ENCODE measurements at regions of chr18 and their contacts with region 1.

Region 1: GRCh38 chr18:54679318-54680149 is 88.5 kb downstream of the DYNAP start:
- DNase-seq: peak; percentile 79
- H3K4me3 ChIP-seq: no peak overlapping the region
- H3K27ac ChIP-seq: no peak overlapping the region
- H3K4me1 ChIP-seq: no peaks in the 10 kb centered on the region
- H3K27me3 ChIP-seq: no peaks in the 10 kb centered on the region
- CTCF ChIP-seq: peak; percentile 27 to 30
- POLR2A ChIP-seq: no peak

Region 2: DNA sequence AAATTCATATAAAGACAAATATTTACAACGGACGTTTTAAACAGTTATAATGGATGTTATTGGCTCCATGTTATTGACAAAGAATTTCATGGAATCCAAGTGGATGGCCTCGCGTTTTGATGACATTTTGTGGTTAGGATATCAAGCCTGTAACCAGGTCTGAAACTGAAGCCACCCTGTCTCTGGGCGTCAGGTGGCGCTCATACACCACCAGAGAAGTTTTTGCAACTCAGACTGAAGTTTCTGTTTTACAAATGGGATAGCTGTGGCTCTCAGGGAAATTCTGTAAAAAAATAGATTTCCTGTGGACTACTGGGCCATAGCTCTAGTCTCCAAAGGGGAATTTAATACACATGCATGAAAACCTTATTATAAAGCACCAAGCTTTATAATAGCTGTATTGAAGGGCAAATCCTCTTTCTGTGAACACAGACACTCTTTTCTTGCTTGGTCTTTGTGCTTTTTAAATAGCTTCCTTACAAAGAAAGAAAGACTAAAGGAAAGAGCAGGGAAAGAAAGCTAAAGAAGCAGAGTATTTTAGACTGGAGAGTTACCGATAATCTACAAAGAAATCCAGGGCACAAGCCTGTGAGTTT is 235.1 kb before region 1 on chr18:
- CTCF ChIA-PET with region 1: interaction called, 10 read pairs
- POLR2A ChIA-PET with region 1: no interaction called
- dilution Hi-C with region 1: no loop called
- intact Hi-C with region 1: no loop called
- DNase-seq: peak; percentile 66
- H3K4me3 ChIP-seq: no peak overlapping the region
- H3K27ac ChIP-seq: no peak overlapping the region
- H3K4me1 ChIP-seq: no peaks in the 10 kb centered on the region
- H3K27me3 ChIP-seq: peaks cover 3 to 5% of the 10 kb centered on the region in 2 experiments
- CTCF ChIP-seq: peak; percentile 59 to 71
- POLR2A ChIP-seq: no peak

Region 3: GRCh38 chr18:54690198-54690597 is 10.7 kb after region 1 on chr18:
- CTCF ChIA-PET with region 1: interaction called, 15 read pairs
- POLR2A ChIA-PET with region 1: no interaction called
- dilution Hi-C with region 1: no loop called
- intact Hi-C with region 1: no loop called
- DNase-seq: peak; percentile 55
- H3K4me3 ChIP-seq: no peak overlapping the region
- H3K27ac ChIP-seq: no peak overlapping the region
- H3K4me1 ChIP-seq: peaks cover 7% of the 10 kb centered on the region
- H3K27me3 ChIP-seq: no peaks in the 10 kb centered on the region
- CTCF ChIP-seq: no peak
- POLR2A ChIP-seq: no peak

Region 4: GRCh38 chr18:54776282-54776977 is 96.9 kb after region 1 on chr18:
- CTCF ChIA-PET with region 1: interaction called, 13 read pairs
- POLR2A ChIA-PET with region 1: no interaction called
- dilution Hi-C with region 1: no loop called
- intact Hi-C with region 1: no loop called
- DNase-seq: peak; percentile 66
- H3K4me3 ChIP-seq: no peak overlapping the region
- H3K27ac ChIP-seq: peak overlapping the region; percentile 88
- H3K4me1 ChIP-seq: peaks cover 16% of the 10 kb centered on the region
- H3K27me3 ChIP-seq: no peaks in the 10 kb centered on the region
- CTCF ChIP-seq: no peak
- POLR2A ChIP-seq: no peak

Region 5: DNA sequence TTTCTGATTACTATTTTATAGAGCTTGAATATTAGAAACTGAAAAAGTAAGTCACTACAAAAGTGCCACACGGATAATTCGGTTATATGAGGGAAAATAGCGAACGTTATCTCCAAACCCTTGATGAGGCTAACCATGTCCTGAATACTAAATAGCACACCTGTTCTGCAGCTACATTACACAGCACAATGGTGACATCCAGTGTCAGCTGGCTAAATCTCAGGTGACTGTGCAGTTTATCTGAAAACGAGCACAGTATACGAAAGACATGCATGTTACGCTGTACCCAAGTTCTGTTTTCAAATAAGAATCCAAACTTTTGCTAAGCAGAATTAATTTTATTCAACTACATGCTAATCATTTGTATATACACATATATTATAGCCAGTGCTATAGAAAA is 270.7 kb after region 1 on chr18:
- CTCF ChIA-PET with region 1: interaction called, 18 read pairs
- POLR2A ChIA-PET with region 1: no interaction called
- dilution Hi-C with region 1: no loop called
- intact Hi-C with region 1: no loop called
- DNase-seq: no peak
- H3K4me3 ChIP-seq: no peak overlapping the region
- H3K27ac ChIP-seq: no peak overlapping the region
- H3K4me1 ChIP-seq: peaks cover 15% of the 10 kb centered on the region
- H3K27me3 ChIP-seq: no peaks in the 10 kb centered on the region
- CTCF ChIP-seq: no peak
- POLR2A ChIP-seq: no peak

Region 6: DNA sequence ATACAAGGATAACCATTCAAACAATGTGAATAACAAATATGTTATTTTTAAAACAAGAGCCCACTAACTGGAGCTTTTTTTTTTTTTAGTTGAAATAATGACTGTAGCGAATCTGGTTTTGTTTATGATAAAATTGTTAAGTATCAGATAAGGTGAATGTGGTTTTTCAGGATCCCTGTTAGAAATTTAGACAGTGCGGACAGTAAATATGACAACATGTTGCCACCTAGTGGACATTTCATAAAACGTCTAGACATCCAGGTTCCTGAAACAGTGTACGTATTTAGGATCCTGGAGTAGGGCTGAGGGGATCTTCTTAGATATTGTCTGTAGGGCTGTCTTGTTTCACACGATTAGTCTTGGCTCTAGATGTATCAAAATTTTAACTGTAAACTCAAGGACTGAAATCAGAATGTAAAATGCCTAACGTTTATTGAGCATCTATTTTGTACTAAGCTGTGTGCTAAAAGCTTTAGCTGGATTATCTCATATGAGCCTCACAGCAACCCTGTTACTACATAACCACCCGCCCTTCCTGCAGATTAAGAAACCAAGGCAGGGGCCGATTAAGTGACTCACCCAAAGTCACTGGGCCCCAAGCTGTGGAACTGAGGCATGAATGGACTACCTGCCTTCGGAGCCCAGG is 303.6 kb after region 1 on chr18:
- CTCF ChIA-PET with region 1: interaction called, 164 read pairs
- POLR2A ChIA-PET with region 1: no interaction called
- dilution Hi-C with region 1: no loop called
- intact Hi-C with region 1: loop called (anchors 1 kb)
- DNase-seq: peak; percentile 59
- H3K4me3 ChIP-seq: no peak overlapping the region
- H3K27ac ChIP-seq: no peak overlapping the region
- H3K4me1 ChIP-seq: no peaks in the 10 kb centered on the region
- H3K27me3 ChIP-seq: no peaks in the 10 kb centered on the region
- CTCF ChIP-seq: peak; percentile 33 to 41
- POLR2A ChIP-seq: no peak

Region 7: GRCh38 chr18:55227771-55228170 is 548.2 kb after region 1 on chr18:
- CTCF ChIA-PET with region 1: no interaction called
- POLR2A ChIA-PET with region 1: no interaction called
- dilution Hi-C with region 1: no loop called
- intact Hi-C with region 1: loop called (anchors 2 kb)
- DNase-seq: no peak
- H3K4me3 ChIP-seq: no peak overlapping the region
- H3K27ac ChIP-seq: no peak overlapping the region
- H3K4me1 ChIP-seq: no peaks in the 10 kb centered on the region
- H3K27me3 ChIP-seq: no peaks in the 10 kb centered on the region
- CTCF ChIP-seq: no peak
- POLR2A ChIP-seq: no peak

Region 8: DNA sequence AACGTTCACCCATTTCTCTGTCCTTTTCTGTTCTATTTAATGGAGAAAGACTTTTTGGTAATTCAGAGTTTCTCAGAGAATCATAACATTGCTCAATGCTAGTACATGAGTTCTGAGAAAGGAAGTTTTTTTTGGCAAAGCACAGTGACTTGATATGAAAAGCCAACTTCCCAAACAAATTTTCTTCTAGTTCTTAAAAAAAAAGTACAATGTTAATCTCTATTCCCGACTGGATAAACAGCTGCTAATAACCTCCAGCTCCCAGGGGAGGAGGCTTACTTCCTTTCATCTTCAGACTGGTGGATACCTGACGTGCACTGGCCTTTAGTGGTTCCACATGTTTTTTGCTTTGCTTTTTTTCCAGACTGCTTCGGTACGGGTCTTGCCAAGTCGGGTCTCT is 564.3 kb after region 1 on chr18:
- CTCF ChIA-PET with region 1: no interaction called
- POLR2A ChIA-PET with region 1: no interaction called
- dilution Hi-C with region 1: no loop called
- intact Hi-C with region 1: no loop called
- DNase-seq: peak; percentile 86
- H3K4me3 ChIP-seq: no peak overlapping the region
- H3K27ac ChIP-seq: peak overlapping the region; percentile 33
- H3K4me1 ChIP-seq: peaks cover 29% of the 10 kb centered on the region
- H3K27me3 ChIP-seq: no peaks in the 10 kb centered on the region
- CTCF ChIP-seq: no peak
- POLR2A ChIP-seq: no peak